Dendritic cell treated with granulocyte-macrophage colony-stimulating factor and Interleukin-4, amounts not matched to agents 40 ng/mL and 50 ng/mL, for 4 days (primary cell): ENCODE measurements at regions of chr7 and their contacts with region 1.

Region 1: GRCh38 chr7:114944745-114945625 is 23.1 kb downstream of the MDFIC start:
- H3K4me3 Mint-ChIP-seq: no peak overlapping the region
- H3K27ac Mint-ChIP-seq: peak overlapping the region; percentile 83
- H3K4me1 Mint-ChIP-seq: peaks cover 73% of the 10 kb centered on the region
- H3K27me3 Mint-ChIP-seq: no peaks in the 10 kb centered on the region

Region 2: GRCh38 chr7:114715907-114716306 is 229.1 kb before region 1 on chr7:
- intact Hi-C with region 1: no loop called
- H3K4me3 Mint-ChIP-seq: no peak overlapping the region
- H3K27ac Mint-ChIP-seq: no peak overlapping the region
- H3K4me1 Mint-ChIP-seq: no peaks in the 10 kb centered on the region
- H3K27me3 Mint-ChIP-seq: no peaks in the 10 kb centered on the region

Region 3: DNA sequence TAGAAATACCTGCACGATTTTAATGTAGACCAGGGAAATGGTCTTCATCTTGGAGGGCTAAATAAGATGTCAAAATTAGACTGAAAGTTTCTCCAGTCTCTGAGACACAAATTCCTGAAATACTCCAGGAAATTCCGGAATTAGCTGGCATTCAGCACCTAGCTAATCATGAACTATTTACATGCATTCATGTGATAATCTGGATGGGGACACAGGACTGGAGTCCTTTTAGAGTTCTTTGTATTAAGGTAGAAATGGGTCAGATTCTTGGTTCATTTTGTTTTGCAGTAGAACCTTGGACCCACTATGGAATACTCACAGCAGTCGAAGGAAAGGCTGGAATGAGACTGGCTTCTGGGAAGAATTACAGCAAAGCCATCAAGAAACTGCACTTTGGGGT is 88.4 kb before region 1 on chr7:
- intact Hi-C with region 1: no loop called
- H3K4me3 Mint-ChIP-seq: no peak overlapping the region
- H3K27ac Mint-ChIP-seq: no peak overlapping the region
- H3K4me1 Mint-ChIP-seq: no peaks in the 10 kb centered on the region
- H3K27me3 Mint-ChIP-seq: no peaks in the 10 kb centered on the region

Region 4: GRCh38 chr7:114959931-114960330 is 14.9 kb after region 1 on chr7:
- intact Hi-C with region 1: loop called (anchors 2 kb)
- H3K4me3 Mint-ChIP-seq: no peak overlapping the region
- H3K27ac Mint-ChIP-seq: no peak overlapping the region
- H3K4me1 Mint-ChIP-seq: peaks cover 46% of the 10 kb centered on the region
- H3K27me3 Mint-ChIP-seq: no peaks in the 10 kb centered on the region

Region 5: GRCh38 chr7:115941703-115942268 is 996.8 kb after region 1 on chr7:
- intact Hi-C with region 1: loop called (anchors 5 kb)
- H3K4me3 Mint-ChIP-seq: no peak overlapping the region
- H3K27ac Mint-ChIP-seq: peak overlapping the region; percentile 84
- H3K4me1 Mint-ChIP-seq: peaks cover 36% of the 10 kb centered on the region
- H3K27me3 Mint-ChIP-seq: no peaks in the 10 kb centered on the region